ENCODE measurements at regions of chr17 and their contacts with region 1.

Region 1: DNA sequence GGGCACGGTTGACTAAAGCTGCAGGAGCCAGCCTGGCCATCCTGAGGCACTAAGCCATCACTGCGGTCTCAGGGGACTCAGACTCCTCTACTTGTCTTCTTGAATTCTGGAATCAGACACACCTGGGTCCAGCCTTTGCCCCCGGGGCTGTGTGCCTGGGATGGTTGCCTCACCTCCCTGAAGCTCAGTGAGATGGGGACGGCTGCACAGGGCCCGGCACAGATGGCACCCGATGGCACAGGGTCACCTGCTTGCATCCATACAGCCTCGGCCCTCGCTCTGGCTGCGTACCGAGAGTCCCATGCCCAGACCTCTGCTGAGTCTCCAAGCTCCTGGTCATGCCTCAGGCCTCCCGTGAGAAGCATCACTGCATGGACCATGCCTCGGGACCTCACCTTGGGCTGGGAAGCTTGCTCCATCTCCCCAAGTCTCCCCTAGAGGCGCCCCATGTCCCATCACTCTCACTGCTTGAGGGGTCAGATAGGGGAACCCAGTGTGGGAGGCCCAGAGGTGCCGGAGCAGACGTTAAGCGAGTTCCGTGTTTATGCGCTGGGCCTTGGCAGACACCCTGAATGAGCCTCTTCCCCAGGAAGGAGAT is 316.3 kb downstream of the SEC14L1 start:
- DNase-seq: peak in 5 of 9 experiments; percentile 53 to 72 (median 59)
- ATAC-seq: peak; percentile 7
- H3K4me3 ChIP-seq: peak overlapping the region; percentile 93 to 99
- H3K4me3 Mint-ChIP-seq: peak overlapping the region; percentile 94
- H3K27ac ChIP-seq: peak overlapping the region; percentile 80 to 86
- H3K27ac Mint-ChIP-seq: peak overlapping the region; percentile 100
- H3K4me1 ChIP-seq: peaks cover 75% of the 10 kb centered on the region
- H3K4me1 Mint-ChIP-seq: peaks cover 66% of the 10 kb centered on the region
- H3K27me3 ChIP-seq: no peaks in the 10 kb centered on the region
- H3K27me3 Mint-ChIP-seq: no peaks in the 10 kb centered on the region
- CTCF ChIP-seq: no peak

Region 2: DNA sequence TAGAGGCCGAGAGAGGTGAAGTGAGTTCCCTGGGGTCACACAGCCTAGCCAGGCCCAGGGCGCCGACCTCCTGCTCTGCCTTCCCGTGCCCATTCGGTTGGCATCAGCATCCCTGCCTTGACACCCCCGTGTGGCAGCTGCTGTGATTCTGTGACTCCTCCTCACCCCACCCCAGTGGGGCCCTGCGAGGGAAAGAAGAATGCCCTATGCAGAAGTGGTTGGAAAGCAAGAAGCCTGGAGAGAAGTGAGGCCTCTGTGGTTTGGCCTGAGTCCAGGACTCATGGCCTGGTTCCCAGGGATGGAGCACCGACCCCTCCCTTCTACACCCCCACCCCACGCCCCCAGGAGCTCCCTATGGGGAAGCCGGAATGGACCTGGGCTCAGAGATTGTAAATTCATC is 20.0 kb before region 1 on chr17:
- CTCF ChIA-PET with region 1: interaction called, 142 read pairs
- POLR2A ChIA-PET with region 1: interaction called, 242 read pairs
- intact Hi-C with region 1: loop called (anchors 1 kb)
- DNase-seq: peak in 6 of 9 experiments; percentile 42 to 61 (median 56)
- ATAC-seq: no peak
- H3K4me3 ChIP-seq: peak overlapping the region in 1 of 2 experiments; percentile 70
- H3K4me3 Mint-ChIP-seq: peak overlapping the region; percentile 95
- H3K27ac ChIP-seq: peak overlapping the region; percentile 46 to 66
- H3K27ac Mint-ChIP-seq: peak overlapping the region; percentile 97
- H3K4me1 ChIP-seq: peaks cover 83% of the 10 kb centered on the region
- H3K4me1 Mint-ChIP-seq: peaks cover 88% of the 10 kb centered on the region
- H3K27me3 ChIP-seq: no peaks in the 10 kb centered on the region
- H3K27me3 Mint-ChIP-seq: no peaks in the 10 kb centered on the region
- CTCF ChIP-seq: no peak

Region 3: GRCh38 chr17:77471984-77472461 is 15.0 kb after region 1 on chr17:
- CTCF ChIA-PET with region 1: interaction called, 6 read pairs
- POLR2A ChIA-PET with region 1: interaction called, 32 read pairs
- intact Hi-C with region 1: loop called in 1 of 2 experiments (anchors 2 kb)
- DNase-seq: no peak
- ATAC-seq: no peak
- H3K4me3 ChIP-seq: peak overlapping the region; percentile 5 to 33
- H3K4me3 Mint-ChIP-seq: peak overlapping the region; percentile 75
- H3K27ac ChIP-seq: peak overlapping the region; percentile 11 to 62
- H3K27ac Mint-ChIP-seq: peak overlapping the region; percentile 99
- H3K4me1 ChIP-seq: peaks cover 100% of the 10 kb centered on the region
- H3K4me1 Mint-ChIP-seq: peaks cover 95% of the 10 kb centered on the region
- H3K27me3 ChIP-seq: no peaks in the 10 kb centered on the region
- H3K27me3 Mint-ChIP-seq: no peaks in the 10 kb centered on the region
- CTCF ChIP-seq: no peak